Activated naive CD4-positive, alpha-beta T cell treated with anti-CD3 and anti-CD28 coated beads, Interleukin-2, amount 10 ng/mL, durations not matched to agents 7 days and 5 days (primary cell): ENCODE measurements at regions of chr1 and their contacts with region 1.

Region 1: DNA sequence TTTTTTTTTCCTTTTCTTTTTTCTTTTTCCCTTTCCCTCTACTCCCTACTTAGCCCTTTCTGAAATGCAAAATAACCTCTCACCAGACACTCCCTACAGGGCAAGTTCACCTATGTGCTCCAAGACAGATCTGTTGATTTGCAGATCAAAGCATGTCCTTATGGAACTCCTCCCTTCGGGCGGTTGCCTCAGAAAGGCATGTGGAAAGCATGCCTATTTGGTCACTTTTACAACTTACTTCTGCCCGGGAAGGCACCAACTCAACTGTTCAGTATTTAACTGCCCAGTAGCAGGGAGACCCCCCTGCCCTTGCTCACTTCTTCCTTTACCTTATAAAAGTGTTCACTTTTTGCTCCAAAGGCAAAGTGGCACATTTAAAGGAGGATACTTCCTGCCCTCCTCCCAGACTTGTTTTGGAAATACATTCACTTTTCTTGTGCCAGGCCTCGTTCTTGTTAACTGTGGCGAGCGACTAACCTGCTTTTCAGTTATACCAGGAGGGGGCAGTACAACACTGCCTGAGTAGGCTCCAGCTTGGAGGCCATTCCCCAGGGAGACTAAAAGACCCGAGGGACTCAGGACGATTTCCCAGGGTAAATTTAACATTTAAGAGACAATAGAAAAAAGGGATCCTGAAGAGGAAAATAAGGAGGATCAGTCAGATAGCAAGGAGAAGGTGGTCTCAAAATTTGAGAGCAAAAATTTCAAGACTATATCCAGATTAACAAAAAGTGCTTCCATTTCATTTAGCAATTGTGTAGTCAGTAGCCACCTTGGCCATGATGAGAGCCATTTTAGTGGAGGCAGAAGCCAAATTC is 12.3 kb upstream of the SLAMF7 start:
- DNase-seq: peak; percentile 75
- H3K4me3 Mint-ChIP-seq: no peak overlapping the region
- H3K27ac Mint-ChIP-seq: no peak overlapping the region
- H3K4me1 Mint-ChIP-seq: peaks cover 22% of the 10 kb centered on the region
- H3K27me3 Mint-ChIP-seq: no peaks in the 10 kb centered on the region

Region 2: DNA sequence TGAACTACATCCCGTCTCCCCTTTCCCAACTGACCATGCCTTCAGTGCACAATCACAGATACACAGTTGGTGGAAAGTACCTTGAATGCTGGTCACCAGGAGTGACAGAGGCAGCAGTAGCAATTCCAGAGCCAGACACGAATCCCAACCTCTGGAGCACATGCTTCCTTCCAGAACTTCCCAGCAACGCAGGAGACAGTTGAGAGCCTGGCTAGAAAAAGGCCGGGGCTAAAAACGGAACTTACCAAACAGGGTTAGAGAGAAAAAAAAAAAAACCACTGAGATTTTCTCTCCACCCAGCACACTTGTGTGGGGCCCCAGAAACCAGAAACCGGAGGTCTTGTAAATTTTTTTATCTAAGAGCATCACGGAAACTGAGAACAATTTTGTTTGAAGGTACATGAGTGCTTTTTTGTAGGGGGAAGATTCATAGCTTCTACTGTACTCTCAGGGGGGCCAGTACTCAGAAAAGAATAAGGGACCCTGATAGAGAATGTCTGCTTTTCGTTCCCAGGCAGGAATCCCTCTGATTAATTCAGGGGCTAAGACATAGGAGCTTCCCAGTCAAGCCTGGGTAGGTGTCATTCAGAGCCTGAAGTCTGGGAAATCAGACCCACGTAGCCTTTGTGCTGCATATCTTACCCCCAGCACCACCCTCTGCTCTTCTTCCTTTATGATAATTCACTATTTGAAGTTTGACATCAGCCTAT is 14.9 kb before region 1 on chr1 and contains the start of gene CD48:
- CTCF ChIA-PET with region 1: interaction called, 33 read pairs
- DNase-seq: peak; percentile 71
- H3K4me3 Mint-ChIP-seq: no peak within 1 kb of the TSS
- H3K27ac Mint-ChIP-seq: no peak within 1 kb of the TSS
- H3K4me1 Mint-ChIP-seq: peaks cover 27% of the 10 kb centered on the region
- H3K27me3 Mint-ChIP-seq: no peaks in the 10 kb centered on the region

Region 3: DNA sequence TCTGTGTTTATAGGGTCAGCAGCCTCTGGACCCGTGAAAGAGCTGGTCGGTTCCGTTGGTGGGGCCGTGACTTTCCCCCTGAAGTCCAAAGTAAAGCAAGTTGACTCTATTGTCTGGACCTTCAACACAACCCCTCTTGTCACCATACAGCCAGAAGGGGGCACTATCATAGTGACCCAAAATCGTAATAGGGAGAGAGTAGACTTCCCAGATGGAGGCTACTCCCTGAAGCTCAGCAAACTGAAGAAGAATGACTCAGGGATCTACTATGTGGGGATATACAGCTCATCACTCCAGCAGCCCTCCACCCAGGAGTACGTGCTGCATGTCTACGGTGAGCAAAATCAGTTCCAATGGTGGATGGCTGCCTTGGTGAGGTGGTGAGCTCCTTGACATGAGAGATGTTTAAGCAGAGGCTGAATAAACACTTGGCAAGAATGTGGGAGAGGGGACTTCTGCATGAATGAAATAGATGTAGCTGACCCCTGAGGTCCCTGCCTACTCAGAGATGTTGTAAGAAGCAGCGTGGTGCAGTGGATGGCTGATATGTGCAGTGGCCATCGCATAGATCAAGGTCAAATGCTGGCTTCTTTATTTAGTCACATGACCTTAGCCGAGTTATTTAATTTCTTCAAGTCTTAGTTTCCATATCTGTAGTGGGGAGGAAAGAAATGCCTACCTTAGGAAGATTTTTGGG is 21.6 kb after region 1 on chr1:
- CTCF ChIA-PET with region 1: interaction called, 23 read pairs
- DNase-seq: no peak
- H3K4me3 Mint-ChIP-seq: no peak overlapping the region
- H3K27ac Mint-ChIP-seq: no peak overlapping the region
- H3K4me1 Mint-ChIP-seq: peaks cover 79% of the 10 kb centered on the region
- H3K27me3 Mint-ChIP-seq: no peaks in the 10 kb centered on the region

Region 4: DNA sequence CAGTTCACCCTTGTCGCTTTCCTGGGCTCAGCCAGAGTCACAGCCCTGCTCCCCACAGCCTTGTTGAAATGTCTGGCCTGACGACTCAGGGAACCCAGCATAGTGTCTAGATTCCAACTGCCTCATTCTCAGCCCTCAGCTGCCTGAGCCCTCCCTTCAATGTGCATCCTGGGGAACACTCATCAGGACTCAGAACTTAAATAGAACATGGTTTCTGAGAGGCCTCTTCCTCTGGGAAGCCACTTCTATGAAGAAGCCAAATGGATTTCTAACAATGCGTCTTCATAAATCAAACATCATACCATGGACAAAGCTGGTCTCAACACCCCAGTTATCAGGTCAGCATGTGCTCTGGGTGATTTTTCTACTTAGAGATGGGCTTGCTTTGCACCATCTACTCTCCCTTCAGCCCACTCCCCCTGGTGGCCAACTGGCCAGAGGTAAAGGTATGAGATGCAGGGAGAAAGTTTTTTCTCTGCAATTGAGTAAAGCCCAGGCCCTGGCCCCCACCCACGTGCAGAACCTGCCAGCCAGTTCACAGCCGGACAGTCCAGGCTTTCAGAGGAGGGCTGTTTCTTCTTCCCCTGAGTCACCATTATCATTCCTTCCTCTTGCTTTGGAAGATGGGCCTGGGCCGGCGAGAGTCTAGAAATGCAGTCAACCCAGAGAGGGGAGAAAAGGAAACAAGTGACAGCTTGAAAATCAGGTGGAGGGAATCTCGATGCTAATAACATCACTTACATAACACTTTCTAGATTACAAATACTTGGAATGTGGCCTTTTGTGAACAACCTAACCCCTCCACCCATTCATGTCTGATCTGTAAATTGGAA is 103.8 kb after region 1 on chr1:
- CTCF ChIA-PET with region 1: interaction called, 40 read pairs
- DNase-seq: peak; percentile 88
- H3K4me3 Mint-ChIP-seq: no peak overlapping the region
- H3K27ac Mint-ChIP-seq: no peak overlapping the region
- H3K4me1 Mint-ChIP-seq: peaks cover 26% of the 10 kb centered on the region
- H3K27me3 Mint-ChIP-seq: no peaks in the 10 kb centered on the region

Region 5: DNA sequence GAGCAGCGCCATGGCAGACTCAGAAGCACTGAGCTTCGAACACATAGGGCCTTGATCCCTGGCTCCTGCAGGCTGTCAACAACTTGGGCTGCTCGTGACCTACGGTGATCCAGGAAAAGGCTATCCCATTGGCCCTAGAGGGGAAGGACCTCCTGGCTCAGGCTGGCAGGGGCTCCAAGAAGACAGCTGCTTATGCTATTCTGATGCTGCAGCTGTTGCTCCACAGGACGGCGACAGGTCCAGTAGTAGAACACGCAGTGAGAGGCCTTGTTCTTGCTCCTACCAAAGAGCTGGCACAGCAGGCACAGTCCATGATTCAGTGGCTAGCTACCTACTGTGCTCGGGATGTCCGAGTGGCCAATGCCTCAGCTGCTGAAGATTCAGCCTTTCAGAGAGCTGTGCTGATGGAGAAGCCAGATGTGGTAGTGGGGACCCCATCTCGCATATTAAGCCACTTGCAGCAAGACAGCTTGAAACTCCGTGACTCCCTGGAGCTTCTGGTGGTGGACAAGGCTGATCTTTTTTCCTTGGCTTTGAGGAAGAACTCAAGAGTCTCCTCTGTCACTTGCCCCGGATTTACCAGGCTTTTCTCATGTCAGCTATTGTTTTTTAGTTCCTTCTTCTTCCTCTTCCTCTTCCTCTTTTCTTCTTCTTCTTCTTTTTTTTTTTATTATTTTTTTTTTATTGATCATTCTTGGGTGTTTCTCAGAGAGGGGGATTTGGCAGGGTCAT is 209.0 kb after region 1 on chr1:
- CTCF ChIA-PET with region 1: no interaction called
- DNase-seq: no peak
- H3K4me3 Mint-ChIP-seq: no peak overlapping the region
- H3K27ac Mint-ChIP-seq: no peak overlapping the region
- H3K4me1 Mint-ChIP-seq: no peaks in the 10 kb centered on the region
- H3K27me3 Mint-ChIP-seq: peaks cover 26% of the 10 kb centered on the region

Region 6: DNA sequence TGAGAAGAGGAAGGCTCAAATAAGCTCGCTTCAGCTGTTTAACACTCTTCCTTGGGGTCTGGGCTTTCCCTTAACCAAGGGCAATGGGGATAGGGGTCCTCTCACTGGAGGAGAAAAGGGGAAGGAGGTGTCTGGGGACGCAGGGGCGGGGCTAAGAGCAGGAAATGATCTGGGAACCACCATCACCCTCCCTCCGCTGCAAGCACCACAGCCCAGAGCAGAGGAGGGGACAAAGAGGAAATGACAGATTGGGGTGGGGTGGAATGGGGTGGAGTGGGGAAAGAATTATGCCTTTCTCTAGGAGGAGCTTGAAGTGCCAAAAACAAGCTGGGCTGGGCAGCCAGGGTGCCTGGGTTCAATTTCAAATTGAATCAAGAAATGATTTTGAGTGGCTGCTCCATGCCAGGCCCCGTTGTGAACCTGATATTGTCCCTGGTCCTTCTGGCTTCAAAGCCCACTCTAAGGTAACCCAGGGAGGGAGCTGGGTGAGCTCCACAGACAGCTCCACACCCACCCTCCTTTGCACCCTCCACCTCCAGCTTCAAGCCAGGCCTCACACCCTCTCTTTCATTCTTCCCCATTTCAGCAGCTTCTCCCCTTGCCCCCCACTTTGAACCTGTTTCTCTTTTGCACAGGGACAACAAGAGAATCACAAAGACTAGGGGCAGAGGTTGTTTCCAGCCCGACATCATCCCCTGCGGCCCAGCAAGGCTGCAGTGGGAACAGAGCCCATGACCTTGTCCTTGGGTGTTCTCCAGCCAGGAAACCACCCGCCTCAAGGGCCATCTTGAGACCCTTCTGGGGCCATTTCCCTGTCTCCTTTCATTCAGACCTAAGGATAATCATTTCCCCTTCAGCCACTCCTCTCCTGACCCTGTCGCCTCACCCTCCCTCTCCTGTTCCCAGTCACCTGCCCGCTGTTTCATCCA is 341.9 kb after region 1 on chr1:
- CTCF ChIA-PET with region 1: no interaction called
- DNase-seq: peak; percentile 92
- H3K4me3 Mint-ChIP-seq: peak overlapping the region; percentile 97
- H3K27ac Mint-ChIP-seq: peak overlapping the region; percentile 99
- H3K4me1 Mint-ChIP-seq: peaks cover 76% of the 10 kb centered on the region
- H3K27me3 Mint-ChIP-seq: no peaks in the 10 kb centered on the region